GM13976 (cell line): ENCODE measurements at regions of chr6 and their contacts with region 1.

Region 1: DNA sequence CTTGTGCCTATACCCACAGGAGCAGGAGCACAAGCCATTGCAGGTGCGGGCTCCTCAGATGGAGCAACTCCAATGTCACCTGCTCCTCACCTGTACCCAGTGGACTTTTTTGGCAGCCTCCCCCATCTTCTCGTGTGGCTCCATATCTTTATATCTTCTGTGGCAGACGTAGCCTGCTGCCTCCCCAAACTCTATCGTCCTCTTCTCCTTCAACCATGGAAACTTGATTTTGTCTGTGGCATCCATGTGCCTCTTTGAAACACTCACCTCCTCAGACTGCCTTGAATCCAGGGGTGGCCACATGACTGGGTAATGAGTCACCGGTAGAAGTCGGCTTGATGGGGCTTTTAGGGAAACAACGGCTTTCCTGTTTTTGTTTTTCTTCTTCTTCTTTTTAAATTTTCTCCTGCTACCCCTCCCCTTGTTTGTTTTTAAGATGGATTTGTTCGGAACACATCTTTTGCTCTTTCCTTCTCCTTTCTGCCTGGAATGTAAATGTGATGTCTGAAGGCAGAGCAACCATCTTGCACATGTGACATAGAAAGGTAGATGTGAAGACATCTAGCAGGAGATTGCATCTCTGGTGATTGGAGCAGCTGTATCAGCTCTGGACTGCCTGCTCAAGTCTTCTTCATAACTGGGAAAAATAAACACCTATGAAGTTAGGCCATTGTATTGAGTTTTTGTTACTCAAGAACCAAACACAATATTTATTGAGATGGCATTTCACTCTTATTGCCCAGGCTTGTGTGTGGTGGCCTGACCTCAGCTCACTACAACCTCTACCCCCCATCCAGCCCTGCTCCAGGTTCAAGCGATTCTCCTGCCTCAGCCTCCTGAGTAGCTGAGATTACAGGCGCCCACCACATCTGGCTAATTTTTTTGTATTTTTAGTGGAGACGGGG is 69.9 kb upstream of the DDR1 start:
- DNase-seq: no peak
- CTCF ChIP-seq: no peak

Region 2: GRCh38 chr6:30759575-30760239 is 54.7 kb before region 1 on chr6:
- in situ Hi-C with region 1: loop called (anchors 5 kb)
- DNase-seq: no peak
- CTCF ChIP-seq: no peak